ENCODE measurements at regions of chr1 and their contacts with region 1.

Region 1: GRCh38 chr1:211133836-211134669 is at the start of gene KCNH1:
- DNase-seq: peak in 1 of 2 experiments; percentile 81
- H3K4me3 ChIP-seq: peak within 1 kb of the TSS; percentile 4; the same call in 1 of the 2 replicates
- H3K27ac ChIP-seq: no peak within 1 kb of the TSS
- H3K4me1 ChIP-seq: no peaks in the 10 kb centered on the region
- H3K27me3 ChIP-seq: peaks cover 42% of the 10 kb centered on the region
- CTCF ChIP-seq: peak; percentile 69
- total RNA-seq, gene KCNH1: not detected in 2 replicates

Region 2: GRCh38 chr1:210407207-210407886 is 726.7 kb before region 1 on chr1:
- CTCF ChIA-PET with region 1: no interaction called
- POLR2A ChIA-PET with region 1: no interaction called
- intact Hi-C with region 1: loop called (anchors 1 kb)
- DNase-seq: peak; percentile 48 to 78
- H3K4me3 ChIP-seq: no peak overlapping the region
- H3K27ac ChIP-seq: no peak overlapping the region
- H3K4me1 ChIP-seq: no peaks in the 10 kb centered on the region
- H3K27me3 ChIP-seq: no peaks in the 10 kb centered on the region
- CTCF ChIP-seq: peak; percentile 95

Region 3: DNA sequence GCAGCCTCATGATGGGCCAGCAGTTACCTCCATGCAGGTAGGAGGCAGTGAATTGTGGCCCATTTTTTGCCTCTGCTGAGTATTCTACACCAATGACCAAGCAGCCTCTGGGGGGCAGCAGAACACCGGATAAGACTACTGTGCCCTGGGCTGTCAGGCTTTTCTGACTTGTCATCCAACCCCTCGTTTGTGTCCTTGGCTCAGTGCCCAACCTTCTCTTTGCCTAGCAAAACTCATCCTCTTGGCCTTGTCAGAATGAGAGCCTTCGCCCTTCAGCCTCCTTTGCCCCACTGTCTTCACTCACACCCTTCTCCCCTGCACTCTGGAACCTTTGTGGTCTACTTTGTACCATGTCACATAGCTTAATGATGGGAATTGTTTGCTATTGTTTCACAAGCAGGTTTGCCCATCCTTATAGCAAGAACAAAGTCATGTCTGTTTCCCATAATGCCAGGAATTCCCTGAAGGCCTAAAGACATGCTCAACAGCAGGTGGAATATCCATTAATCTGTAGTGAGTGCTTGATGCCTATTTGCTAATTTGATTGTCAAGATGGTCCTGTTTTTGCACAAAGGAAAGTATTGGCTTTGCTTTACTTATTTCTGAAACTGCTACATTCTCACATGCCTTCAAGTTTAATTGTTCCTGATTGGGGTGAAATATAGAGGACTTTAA is 549.5 kb before region 1 on chr1:
- CTCF ChIA-PET with region 1: no interaction called
- POLR2A ChIA-PET with region 1: no interaction called
- intact Hi-C with region 1: loop called (anchors 1 kb)
- DNase-seq: peak; percentile 64 to 79
- H3K4me3 ChIP-seq: no peak overlapping the region
- H3K27ac ChIP-seq: no peak overlapping the region
- H3K4me1 ChIP-seq: no peaks in the 10 kb centered on the region
- H3K27me3 ChIP-seq: no peaks in the 10 kb centered on the region
- CTCF ChIP-seq: peak; percentile 88

Region 4: DNA sequence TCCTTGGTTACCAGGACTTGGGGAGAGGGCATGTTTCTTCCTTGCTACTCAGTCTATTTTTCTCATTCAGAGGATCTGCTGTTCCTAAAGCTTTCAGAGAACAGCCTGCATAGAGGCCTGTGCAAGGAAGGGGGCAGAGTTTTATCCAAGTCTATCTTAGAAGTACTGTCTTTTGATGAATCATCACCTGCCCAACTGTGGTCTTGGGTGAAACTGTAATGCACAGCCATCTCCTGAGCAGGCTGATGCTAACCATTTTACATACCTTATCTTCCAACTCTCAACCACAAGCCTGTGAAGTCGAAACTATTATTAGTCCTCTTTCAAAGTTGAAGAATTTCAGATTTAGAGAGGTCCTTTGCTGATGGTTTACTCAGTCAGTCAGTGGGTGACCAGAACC is 437.3 kb before region 1 on chr1:
- CTCF ChIA-PET with region 1: interaction called, 12 read pairs
- POLR2A ChIA-PET with region 1: no interaction called
- intact Hi-C with region 1: no loop called
- DNase-seq: no peak
- H3K4me3 ChIP-seq: no peak overlapping the region
- H3K27ac ChIP-seq: no peak overlapping the region
- H3K4me1 ChIP-seq: no peaks in the 10 kb centered on the region
- H3K27me3 ChIP-seq: peaks cover 7% of the 10 kb centered on the region; the same call in 1 of the 2 replicates
- CTCF ChIP-seq: no peak

Region 5: GRCh38 chr1:211258756-211259637 is 124.9 kb after region 1 on chr1 and contains the start of gene RCOR3:
- CTCF ChIA-PET with region 1: interaction called, 3 read pairs
- POLR2A ChIA-PET with region 1: no interaction called
- intact Hi-C with region 1: loop called (anchors 2 kb)
- DNase-seq: peak; percentile 61 to 93
- H3K4me3 ChIP-seq: peak within 1 kb of the TSS; percentile 98
- H3K27ac ChIP-seq: peak within 1 kb of the TSS; percentile 79
- H3K4me1 ChIP-seq: peaks cover 20% of the 10 kb centered on the region
- H3K27me3 ChIP-seq: no peaks in the 10 kb centered on the region
- CTCF ChIP-seq: peak; percentile 63
- total RNA-seq, gene RCOR3: 42.1 and 48.7 TPM in 2 replicates